WTC11 (cell line): ENCODE measurements at regions of chr1 and their contacts with region 1.

Region 1: DNA sequence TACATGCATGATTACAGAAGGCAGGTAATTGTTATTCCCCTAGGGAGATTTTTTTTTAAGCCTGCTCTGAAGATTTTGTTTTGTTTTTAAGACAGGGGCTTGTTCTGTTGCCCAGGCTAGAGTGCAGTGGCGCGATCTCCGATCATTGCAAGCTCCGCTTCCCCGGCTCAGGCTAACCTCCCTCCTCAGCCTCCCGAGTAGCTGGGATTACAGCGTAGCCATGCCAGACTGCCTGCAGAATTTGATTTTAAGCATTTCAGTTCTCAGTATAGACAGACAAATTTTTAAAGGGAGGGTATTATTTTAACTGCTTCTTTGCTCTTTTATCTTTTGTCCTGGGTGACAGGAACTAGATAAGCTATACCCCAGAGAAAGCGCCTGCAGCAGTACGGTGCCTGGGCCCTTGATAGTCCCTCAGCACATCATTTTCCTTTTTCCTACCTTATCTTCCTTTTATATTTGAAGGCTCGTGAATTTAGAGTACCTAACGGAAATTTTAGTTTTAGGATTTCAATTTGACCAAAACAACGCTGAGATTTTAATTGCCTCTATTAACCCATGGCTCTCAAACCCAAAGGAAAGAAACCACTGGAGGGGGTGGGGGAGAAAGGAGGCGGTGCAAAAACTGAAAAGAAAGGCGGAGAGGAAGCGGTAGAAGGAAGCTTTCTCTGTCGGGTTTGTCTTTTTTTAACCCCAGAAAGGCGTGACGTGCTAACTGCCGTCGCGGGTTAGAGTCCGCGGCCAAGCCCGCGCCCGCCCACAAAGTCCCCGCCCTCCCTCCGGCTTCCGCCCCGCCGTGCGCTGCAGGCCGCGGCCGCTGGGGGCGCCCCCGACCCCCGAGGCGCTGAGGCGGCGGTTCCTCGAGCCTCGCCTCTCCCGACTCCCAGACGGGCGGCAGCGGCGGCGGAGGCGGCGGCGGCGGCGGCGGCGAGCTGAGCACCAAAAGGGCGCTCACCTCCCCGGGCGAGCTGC is at the start of gene EEIG2:
- DNase-seq: peak; percentile 84
- ATAC-seq: peak; percentile 82
- H3K4me3 Mint-ChIP-seq: peak within 1 kb of the TSS; percentile 94
- H3K27ac Mint-ChIP-seq: peak within 1 kb of the TSS; percentile 94
- H3K4me1 Mint-ChIP-seq: peaks cover 46% of the 10 kb centered on the region
- H3K27me3 Mint-ChIP-seq: no peaks in the 10 kb centered on the region; the same call in 1 of the 2 replicates
- CTCF ChIP-seq: peak; percentile 76
- total RNA-seq, gene EEIG2: 43.1 to 65.7 TPM (median 45.0 TPM) in 3 replicates

Region 2: DNA sequence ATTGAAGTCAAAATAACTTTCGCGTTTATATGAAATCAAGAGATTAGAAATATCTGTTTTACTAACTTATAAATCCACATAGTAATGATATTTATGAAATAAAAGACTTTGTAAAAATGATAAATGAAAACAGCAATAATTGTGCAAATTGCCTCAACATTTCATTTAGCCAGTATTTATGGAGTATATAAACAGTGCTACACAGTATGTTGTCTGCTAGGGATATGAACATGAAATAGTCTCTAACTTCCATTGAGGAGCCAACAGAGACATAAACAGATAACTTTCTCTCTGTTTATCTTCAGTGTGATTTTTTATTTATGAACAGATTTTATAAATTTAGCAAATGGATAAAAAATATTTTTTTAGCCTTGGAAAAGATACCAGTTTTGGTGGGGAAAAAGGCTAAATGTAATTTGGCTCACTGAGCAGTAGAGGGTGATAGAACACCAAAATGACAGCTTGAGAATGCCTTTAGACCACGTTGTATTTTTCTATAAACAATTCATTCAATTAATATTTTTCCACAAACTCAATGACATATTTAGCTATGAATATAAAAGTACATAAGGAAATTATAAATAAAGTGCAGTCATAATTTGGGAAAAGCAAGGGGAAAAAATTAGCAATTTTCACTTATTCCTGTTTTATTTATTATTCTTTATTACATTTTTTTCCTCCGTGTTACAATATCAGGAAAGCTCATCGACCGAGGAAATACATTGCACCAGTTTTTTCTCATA is 47.1 kb before region 1 on chr1:
- CTCF ChIA-PET with region 1: interaction called, 37 read pairs
- POLR2A ChIA-PET with region 1: interaction called, 3 read pairs
- DNase-seq: no peak
- ATAC-seq: no peak
- H3K4me3 Mint-ChIP-seq: no peak overlapping the region
- H3K27ac Mint-ChIP-seq: no peak overlapping the region
- H3K4me1 Mint-ChIP-seq: 0 out of 2 replicates have a peak, but pooled peaks cover 4% of the 10 kb centered on the region
- H3K27me3 Mint-ChIP-seq: peaks cover 2% of the 10 kb centered on the region; the same call in 1 of the 2 replicates
- CTCF ChIP-seq: peak; percentile 60

Region 3: DNA sequence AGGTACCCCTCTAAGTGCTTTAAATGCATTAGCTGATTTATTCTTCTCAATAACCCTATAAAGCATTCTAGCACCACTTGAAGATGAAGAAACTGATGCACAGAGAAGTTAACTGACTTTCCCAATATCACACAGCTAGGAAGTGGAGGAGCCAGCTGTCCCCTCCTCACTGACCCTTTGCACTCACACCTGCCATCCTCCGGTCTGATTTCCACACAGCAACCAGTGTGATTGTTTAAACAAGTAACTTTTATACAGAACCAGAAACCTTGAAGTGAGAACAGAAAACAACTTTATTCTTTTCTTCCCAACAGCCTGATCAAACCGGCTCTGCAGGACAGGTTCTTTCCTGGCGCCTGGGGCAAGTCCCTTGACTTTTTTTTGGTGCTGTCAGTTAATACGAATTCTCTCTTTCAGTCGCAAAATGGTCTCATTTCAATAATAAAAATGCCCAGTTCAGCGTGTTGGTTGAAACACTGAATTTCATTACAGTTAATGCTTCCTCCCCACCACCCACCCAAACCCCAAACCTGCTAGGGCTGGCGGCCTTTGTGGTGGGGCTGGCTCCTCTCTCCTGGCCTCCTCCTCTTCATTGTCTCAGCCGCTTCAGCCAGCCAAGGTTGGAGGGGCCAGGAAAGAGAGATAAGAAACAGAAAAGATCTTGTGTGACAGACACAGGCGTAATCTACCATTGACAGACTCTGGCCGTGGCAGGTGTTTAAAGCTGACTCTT is 26.0 kb before region 1 on chr1:
- CTCF ChIA-PET with region 1: interaction called, 24 read pairs
- POLR2A ChIA-PET with region 1: interaction called, 5 read pairs
- DNase-seq: peak; percentile 16
- ATAC-seq: peak; percentile 83
- H3K4me3 Mint-ChIP-seq: peak overlapping the region; percentile 43; the same call in 1 of the 2 replicates
- H3K27ac Mint-ChIP-seq: peak overlapping the region; percentile 96
- H3K4me1 Mint-ChIP-seq: peaks cover 40% of the 10 kb centered on the region
- H3K27me3 Mint-ChIP-seq: no peaks in the 10 kb centered on the region; the same call in 1 of the 2 replicates
- CTCF ChIP-seq: no peak

Region 4: DNA sequence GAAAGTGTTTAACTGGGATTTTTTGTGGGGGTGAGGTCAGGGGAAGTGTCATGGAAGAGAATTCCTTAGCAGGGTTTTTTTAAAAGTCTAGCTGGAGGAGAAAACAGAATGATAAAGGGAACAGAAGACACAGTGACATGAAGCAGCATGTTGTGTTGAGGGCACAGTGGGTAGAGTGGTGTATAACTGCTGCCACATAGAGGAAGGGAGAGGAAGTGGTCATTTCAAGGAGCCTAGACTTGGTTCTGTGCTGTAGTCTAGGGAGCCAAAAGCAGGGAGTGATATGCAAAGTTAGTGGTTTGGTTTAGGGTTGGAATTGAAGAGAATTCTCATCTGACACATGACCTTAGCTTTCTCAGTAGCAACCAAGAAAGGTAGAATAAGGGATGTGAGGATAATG is 10.6 kb after region 1 on chr1:
- CTCF ChIA-PET with region 1: interaction called, 16 read pairs
- POLR2A ChIA-PET with region 1: no interaction called
- DNase-seq: no peak
- ATAC-seq: peak; percentile 100
- H3K4me3 Mint-ChIP-seq: no peak overlapping the region
- H3K27ac Mint-ChIP-seq: no peak overlapping the region
- H3K4me1 Mint-ChIP-seq: peaks cover 5% of the 10 kb centered on the region
- H3K27me3 Mint-ChIP-seq: no peaks in the 10 kb centered on the region
- CTCF ChIP-seq: no peak

Region 5: DNA sequence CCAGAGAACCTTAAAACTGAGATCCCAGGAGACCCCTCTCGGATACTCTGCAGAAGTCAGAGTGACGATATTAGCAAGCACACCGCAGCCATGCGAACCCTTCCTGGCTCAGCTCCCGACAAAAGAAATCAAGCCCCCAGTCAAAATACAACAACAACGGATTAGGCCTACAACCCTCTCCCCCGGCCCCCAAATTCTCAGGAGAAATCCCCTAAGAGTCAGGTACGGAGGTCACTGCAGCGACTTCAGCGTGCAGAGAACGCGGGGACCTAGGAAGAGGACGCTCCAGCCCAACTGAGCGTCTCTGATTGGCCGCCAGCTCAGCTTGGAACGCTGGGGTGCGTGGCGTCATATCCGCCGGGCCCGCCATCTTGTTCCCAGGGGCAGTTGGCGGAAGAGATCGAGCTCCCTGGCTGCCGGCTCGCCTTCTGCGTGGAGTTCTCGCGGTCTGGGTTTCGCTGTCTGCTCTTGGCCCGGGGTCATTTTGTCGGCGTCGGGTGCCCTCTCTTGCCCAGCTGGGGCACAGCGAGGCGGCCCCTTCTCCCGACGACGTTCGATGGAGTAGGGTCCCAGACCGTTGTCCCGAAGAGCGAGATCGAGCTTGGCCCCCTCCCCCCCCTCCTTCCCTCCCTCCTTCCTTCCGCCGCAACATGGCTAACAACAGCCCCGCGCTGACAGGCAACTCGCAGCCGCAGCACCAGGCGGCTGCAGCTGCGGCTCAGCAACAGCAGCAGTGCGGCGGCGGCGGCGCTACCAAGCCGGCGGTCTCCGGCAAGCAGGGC is 132.6 kb after region 1 on chr1 and contains the start of gene PRPF38B:
- CTCF ChIA-PET with region 1: interaction called, 10 read pairs
- POLR2A ChIA-PET with region 1: interaction called, 5 read pairs
- DNase-seq: peak; percentile 93
- ATAC-seq: peak; percentile 93
- H3K4me3 Mint-ChIP-seq: peak within 1 kb of the TSS; percentile 99
- H3K27ac Mint-ChIP-seq: peak within 1 kb of the TSS; percentile 99
- H3K4me1 Mint-ChIP-seq: peaks cover 24% of the 10 kb centered on the region
- H3K27me3 Mint-ChIP-seq: no peaks in the 10 kb centered on the region
- CTCF ChIP-seq: no peak
- total RNA-seq, gene PRPF38B: 42.8 to 50.5 TPM (median 43.0 TPM) in 3 replicates